HCT116 (cell line): ENCODE measurements at regions of chr4 and their contacts with region 1.

Region 1: DNA sequence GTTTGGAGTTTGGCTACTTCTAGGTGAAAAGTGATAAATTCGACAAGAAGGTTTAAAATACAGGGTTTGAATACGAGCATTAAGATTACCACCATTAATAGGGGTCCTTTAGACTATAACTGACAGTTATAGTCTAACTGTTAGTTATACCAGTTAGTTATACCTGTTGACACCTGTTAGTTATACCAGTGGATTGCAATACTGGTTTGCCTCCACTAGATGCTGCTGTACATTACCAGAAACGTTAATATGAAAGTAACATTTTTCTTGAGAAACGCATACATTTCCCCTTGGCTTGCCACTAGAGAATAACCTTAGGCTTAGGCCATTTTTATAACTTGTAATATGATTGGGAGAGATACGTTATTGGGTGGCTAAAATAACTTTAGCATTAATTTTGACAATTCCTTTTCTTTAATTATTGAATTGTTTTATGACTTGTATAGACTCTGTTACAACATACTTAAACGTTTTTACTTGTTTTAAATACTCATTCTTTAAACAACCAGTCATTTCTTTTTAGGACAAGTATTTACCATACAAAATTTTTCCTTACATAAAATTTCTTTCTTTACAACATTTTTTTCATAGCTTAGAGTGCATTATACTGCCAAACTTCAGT is 911.2 kb downstream of the FSTL5 start:
- DNase-seq: peak; percentile 28
- ATAC-seq: peak; percentile 64; the same call in 1 of the 2 replicates
- H3K4me3 ChIP-seq: no peak overlapping the region
- H3K27ac ChIP-seq: no peak overlapping the region
- H3K4me1 ChIP-seq: no peaks in the 10 kb centered on the region
- H3K27me3 ChIP-seq: no peaks in the 10 kb centered on the region
- CTCF ChIP-seq: peak; percentile 27 to 83 (median 77); a peak in 4 of 6 replicates
- POLR2A ChIP-seq: no peak
- RAD21 ChIP-seq: peak; percentile 60

Region 2: DNA sequence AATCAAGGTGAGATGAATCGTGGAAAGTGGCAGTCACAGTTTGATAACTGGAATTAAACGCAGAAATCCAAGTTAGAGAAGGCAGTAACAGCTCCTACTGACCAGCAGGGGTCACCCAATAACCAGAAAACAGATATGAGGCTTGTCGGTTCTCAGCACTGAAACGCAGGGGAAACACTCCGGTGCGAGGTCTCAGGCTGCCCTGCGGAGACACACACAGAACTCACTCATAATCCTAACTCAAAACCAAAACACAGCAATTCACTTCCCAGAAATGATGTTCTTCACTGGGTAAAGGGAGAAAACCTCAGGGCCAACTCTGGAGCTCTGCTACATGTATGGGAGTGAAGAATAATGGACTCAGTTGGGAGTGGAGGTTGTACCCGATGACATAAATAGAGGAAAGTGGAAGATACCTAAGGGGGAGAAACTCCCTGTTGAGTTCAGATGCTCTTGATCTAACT is 1765.3 kb before region 1 on chr4:
- CTCF ChIA-PET with region 1: no interaction called
- POLR2A ChIA-PET with region 1: no interaction called
- RAD21 ChIA-PET with region 1: no interaction called
- intact Hi-C with region 1: loop called (anchors 5 kb)
- DNase-seq: peak; percentile 65
- ATAC-seq: peak; percentile 97
- H3K4me3 ChIP-seq: 0 out of 4 replicates have a peak overlapping the region, but pooled peaks have one; percentile 7 to 23
- H3K27ac ChIP-seq: no peak overlapping the region
- H3K4me1 ChIP-seq: peaks cover 0 to 4% of the 10 kb centered on the region in 2 experiments; a peak in 1 of 4 replicates
- H3K27me3 ChIP-seq: no peaks in the 10 kb centered on the region
- CTCF ChIP-seq: peak; percentile 45 to 90 (median 74); a peak in 5 of 6 replicates
- POLR2A ChIP-seq: no peak
- RAD21 ChIP-seq: peak; percentile 91

Region 3: GRCh38 chr4:159946983-159947615 is 1305.5 kb before region 1 on chr4:
- CTCF ChIA-PET with region 1: no interaction called
- POLR2A ChIA-PET with region 1: no interaction called
- RAD21 ChIA-PET with region 1: no interaction called
- intact Hi-C with region 1: loop called (anchors 10 kb)
- DNase-seq: peak; percentile 70
- ATAC-seq: peak; percentile 73
- H3K4me3 ChIP-seq: no peak overlapping the region
- H3K27ac ChIP-seq: no peak overlapping the region
- H3K4me1 ChIP-seq: no peaks in the 10 kb centered on the region
- H3K27me3 ChIP-seq: no peaks in the 10 kb centered on the region
- CTCF ChIP-seq: peak; percentile 55 to 87 (median 66); a peak in 5 of 6 replicates
- POLR2A ChIP-seq: no peak
- RAD21 ChIP-seq: peak; percentile 82

Region 4: DNA sequence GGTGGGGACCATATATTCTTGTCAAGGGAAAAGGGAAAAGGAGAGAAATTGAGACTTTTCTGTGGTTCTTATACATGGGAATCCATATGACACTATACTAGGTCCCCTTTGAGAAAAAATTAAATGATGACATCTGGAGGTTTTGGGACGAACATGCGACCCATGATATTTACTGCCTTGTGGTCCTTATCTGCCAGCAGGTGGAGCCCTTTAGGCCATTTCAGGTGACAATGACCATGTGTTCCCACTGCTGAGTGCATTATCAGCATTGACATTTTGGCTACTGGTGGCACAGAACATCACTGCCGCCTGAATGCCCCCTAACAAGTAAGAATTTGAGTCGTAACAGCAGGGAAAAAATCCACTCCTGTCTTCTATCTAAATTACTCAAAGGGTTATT is 67.7 kb after region 1 on chr4:
- CTCF ChIA-PET with region 1: no interaction called
- POLR2A ChIA-PET with region 1: no interaction called
- RAD21 ChIA-PET with region 1: no interaction called
- intact Hi-C with region 1: no loop called
- DNase-seq: peak; percentile 56
- ATAC-seq: peak; percentile 91
- H3K4me3 ChIP-seq: no peak overlapping the region
- H3K27ac ChIP-seq: no peak overlapping the region
- H3K4me1 ChIP-seq: no peaks in the 10 kb centered on the region
- H3K27me3 ChIP-seq: no peaks in the 10 kb centered on the region
- CTCF ChIP-seq: peak; percentile 63 to 89 (median 74)
- POLR2A ChIP-seq: no peak
- RAD21 ChIP-seq: peak; percentile 63

Region 5: DNA sequence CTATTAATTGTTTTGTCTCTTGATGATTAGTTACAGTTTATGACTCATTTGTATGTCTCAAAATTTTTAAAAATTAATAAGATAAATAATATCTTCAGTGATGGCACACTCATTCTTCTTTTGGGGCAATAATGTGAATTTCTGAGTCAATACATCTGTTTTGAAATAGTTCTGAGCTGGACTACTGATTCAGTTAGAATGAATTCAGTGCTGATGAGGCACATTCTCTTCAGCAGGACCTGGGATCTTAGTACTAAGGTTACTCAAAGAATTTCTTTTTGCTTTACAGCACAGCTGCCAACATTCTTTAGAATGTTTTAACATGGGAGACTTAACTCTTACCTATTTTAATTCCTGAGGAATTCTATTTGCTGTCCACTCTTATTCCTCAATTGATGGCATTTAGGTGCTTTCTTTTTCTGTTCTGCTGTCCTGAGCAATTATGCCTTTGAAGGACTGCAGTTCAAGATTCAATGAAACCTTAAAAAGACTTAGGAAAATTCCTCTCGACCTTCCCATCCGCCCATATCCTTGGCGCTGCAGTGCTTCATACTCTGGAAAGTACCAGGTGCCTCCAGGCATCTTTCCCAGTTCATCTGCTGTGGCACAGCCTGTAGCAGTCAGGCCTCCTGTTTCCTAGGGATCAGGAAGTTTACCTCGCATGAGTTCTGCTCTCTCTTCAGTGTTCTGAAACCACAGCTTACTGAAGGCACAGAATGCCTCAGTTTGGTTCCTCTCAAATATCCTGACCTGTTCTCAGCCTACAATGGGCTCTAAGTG is 697.5 kb after region 1 on chr4:
- CTCF ChIA-PET with region 1: interaction called, 3 read pairs
- POLR2A ChIA-PET with region 1: no interaction called
- RAD21 ChIA-PET with region 1: no interaction called
- intact Hi-C with region 1: loop called (anchors 5 kb)
- DNase-seq: no peak
- ATAC-seq: no peak
- H3K4me3 ChIP-seq: no peak overlapping the region
- H3K27ac ChIP-seq: no peak overlapping the region
- H3K4me1 ChIP-seq: no peaks in the 10 kb centered on the region
- H3K27me3 ChIP-seq: no peaks in the 10 kb centered on the region
- CTCF ChIP-seq: no peak
- POLR2A ChIP-seq: no peak
- RAD21 ChIP-seq: no peak

Region 6: GRCh38 chr4:162163852-162164759 is 911.5 kb after region 1 on chr4 and contains the start of gene FSTL5:
- CTCF ChIA-PET with region 1: no interaction called
- POLR2A ChIA-PET with region 1: no interaction called
- RAD21 ChIA-PET with region 1: no interaction called
- intact Hi-C with region 1: loop called (anchors 10 kb)
- DNase-seq: no peak
- ATAC-seq: no peak
- H3K4me3 ChIP-seq: no peak within 1 kb of the TSS
- H3K27ac ChIP-seq: no peak within 1 kb of the TSS
- H3K4me1 ChIP-seq: peaks cover 4 to 10% of the 10 kb centered on the region in 2 experiments; a peak in 2 of 4 replicates
- H3K27me3 ChIP-seq: no peaks in the 10 kb centered on the region
- CTCF ChIP-seq: no peak
- POLR2A ChIP-seq: no peak
- RAD21 ChIP-seq: no peak
- total RNA-seq, gene FSTL5: not detected

Region 7: DNA sequence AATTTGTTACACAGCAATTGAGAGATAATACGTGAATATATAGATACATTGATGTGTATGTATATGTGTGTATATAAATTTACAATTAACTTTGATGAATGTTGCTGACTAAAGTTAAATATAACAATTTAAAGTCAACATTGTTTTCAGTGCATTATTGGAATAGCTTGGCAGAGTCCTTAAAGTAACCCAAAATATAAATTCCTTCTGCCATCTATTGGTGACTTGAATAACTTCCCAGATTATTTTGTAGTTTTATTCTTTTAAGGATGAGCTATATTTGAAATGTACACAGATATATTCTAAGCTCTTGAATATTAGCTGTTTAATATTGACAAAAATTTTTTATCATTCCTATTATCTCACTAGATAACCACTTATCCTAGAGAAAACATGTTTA is 1209.3 kb after region 1 on chr4:
- CTCF ChIA-PET with region 1: interaction called, 4 read pairs
- POLR2A ChIA-PET with region 1: no interaction called
- RAD21 ChIA-PET with region 1: no interaction called
- intact Hi-C with region 1: loop called (anchors 5 kb)
- DNase-seq: peak; percentile 10
- ATAC-seq: no peak
- H3K4me3 ChIP-seq: no peak overlapping the region
- H3K27ac ChIP-seq: no peak overlapping the region
- H3K4me1 ChIP-seq: no peaks in the 10 kb centered on the region
- H3K27me3 ChIP-seq: no peaks in the 10 kb centered on the region
- CTCF ChIP-seq: peak in 2 of 3 experiments; percentile 22 to 48; a peak in 2 of 6 replicates
- POLR2A ChIP-seq: no peak
- RAD21 ChIP-seq: peak; percentile 58